ENCODE measurements at regions of chr13 and their contacts with region 1.

Region 1: DNA sequence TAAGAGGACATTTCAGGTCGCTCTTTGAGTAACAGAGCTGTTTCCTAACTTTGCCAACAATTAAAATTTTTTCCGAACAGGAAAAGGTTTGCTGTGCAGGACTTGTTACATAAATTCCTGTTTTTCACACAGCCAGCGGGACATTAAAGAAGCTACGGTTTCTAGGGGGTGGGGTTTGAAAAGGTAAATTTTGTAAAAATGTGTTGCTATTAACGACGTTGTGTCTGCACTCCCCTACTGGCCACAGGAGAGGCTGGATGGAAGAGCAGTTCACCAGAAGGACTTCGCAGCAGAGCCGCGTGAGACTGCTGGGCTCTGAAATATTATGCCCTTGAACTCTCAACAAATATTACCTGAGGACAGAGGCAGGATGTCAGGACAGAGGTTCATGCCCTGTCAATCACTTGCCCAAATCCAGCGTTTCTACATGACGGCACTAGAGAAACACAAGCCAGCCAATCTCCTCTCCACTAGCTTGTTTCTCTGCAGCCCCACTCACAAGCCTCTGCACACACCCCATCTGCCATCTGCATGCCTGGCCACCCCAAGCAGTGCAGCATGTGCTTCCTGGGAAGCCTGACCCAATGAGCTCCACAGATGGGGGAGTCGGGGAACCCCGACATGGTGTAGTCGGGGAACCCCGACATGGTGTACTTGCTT is 102.0 kb downstream of the FOXO1 start:
- DNase-seq: no peak
- H3K4me3 Mint-ChIP-seq: peak overlapping the region; percentile 19
- H3K27ac Mint-ChIP-seq: peak overlapping the region; percentile 67
- H3K4me1 Mint-ChIP-seq: peaks cover 55% of the 10 kb centered on the region
- H3K27me3 Mint-ChIP-seq: no peaks in the 10 kb centered on the region

Region 2: GRCh38 chr13:39855236-39855635 is 709.2 kb before region 1 on chr13:
- intact Hi-C with region 1: no loop called
- DNase-seq: no peak
- H3K4me3 Mint-ChIP-seq: no peak overlapping the region
- H3K27ac Mint-ChIP-seq: no peak overlapping the region
- H3K4me1 Mint-ChIP-seq: peaks cover 3% of the 10 kb centered on the region
- H3K27me3 Mint-ChIP-seq: peaks cover 12% of the 10 kb centered on the region

Region 3: DNA sequence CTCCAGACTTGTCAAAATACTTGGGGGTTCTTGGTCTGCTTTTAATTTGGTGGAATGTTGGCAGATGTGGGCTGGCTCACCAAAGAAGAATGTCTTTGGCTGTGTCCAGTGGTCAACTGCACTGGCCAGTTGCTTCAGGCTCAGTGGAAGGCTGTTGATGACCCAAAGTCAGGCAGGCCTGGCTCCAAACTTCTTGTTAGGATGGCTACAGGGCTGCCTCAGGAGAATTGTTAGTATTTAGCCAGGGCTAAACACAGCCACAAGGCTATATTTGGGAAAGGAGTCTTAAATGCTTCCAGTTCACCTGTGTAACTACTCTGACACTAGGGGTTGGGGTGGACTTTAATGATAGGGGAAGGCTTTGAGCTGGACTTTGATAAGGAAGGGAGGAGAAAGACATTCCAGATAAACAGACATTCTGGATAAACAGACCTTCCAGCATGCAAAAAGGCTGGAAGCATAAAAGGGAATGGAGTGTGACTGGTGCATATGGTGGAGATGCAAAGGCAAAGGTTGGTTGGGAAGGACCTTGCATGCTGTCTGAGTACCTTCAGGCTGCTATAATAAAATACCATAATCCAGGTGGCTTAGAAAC is 14.9 kb before region 1 on chr13:
- intact Hi-C with region 1: no loop called
- DNase-seq: no peak
- H3K4me3 Mint-ChIP-seq: no peak overlapping the region
- H3K27ac Mint-ChIP-seq: no peak overlapping the region
- H3K4me1 Mint-ChIP-seq: peaks cover 2% of the 10 kb centered on the region
- H3K27me3 Mint-ChIP-seq: no peaks in the 10 kb centered on the region

Region 4: DNA sequence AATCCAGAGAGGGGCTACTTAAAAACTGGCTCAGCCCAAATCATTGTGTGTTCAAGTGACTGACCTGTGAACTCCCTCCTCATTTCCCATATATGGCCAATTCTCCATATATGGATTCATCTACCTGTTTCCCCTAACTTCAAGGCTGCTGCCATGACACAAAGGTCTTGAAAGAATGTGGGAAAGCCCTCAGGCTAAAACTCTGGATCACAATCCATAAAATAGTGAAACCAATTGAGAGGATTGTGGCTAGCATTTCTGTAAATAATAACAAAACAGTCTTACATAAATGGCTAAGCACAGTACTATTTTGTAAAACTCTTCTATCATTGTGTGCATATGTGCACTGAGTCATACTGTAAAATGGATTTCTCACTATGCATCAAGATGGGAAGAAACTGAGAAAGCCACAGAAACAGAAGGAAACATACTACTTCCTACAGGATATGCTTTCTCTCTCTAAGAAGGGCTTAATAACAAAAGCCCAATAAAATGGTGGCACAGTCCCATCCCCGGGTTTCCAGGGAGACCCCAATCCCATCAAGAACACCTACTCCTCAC is 21.5 kb after region 1 on chr13:
- intact Hi-C with region 1: loop called (anchors 2 kb)
- DNase-seq: no peak
- H3K4me3 Mint-ChIP-seq: no peak overlapping the region
- H3K27ac Mint-ChIP-seq: no peak overlapping the region
- H3K4me1 Mint-ChIP-seq: peaks cover 67% of the 10 kb centered on the region
- H3K27me3 Mint-ChIP-seq: no peaks in the 10 kb centered on the region

Measured in activated CD4-positive, alpha-beta T cell treated with anti-CD3 and anti-CD28 coated beads, Interleukin-2, amount 10 ng/mL, durations not matched to agents 24 days and 14 days (primary cell).